ENCODE measurements at regions of chr1 and their contacts with region 1.

Region 1: DNA sequence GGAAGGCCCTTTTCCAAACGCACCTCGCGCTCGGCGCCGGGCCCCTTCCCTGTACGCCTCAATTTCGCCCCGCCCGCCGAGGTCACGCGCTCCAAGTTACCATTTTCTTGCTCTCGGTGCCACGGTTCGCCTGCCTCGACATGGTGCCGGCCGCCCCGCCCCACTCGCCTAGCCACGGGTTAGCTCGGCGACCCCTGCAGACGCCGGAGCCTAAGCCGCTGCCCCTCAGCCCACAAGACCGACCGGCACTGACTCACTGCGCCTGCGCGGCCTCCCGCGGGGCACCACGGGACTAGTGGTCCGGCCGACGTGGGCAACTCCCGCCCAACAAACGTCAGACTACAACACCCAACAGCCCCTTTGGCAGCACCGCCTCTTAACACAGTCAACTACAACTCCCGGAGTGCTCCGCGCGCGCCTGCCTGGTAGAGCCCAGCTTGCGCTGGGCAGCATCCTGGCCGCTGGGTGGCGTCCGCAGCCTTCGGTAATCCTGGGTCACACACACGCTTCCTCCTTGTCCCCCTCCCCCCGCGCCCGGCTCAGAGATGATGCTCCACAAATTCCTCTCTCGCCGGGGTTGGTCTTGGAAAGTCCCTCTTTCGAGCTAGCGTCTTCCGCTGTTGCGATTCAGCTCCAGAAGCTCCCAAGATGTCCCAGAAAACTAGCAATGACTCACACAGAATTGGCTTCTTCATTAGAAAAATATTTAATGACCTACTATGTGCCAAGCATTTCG is at the start of gene TRAPPC3:
- DNase-seq: peak; percentile 100
- ATAC-seq: peak; percentile 92 to 93
- total RNA-seq, gene TRAPPC3: 53.3 to 64.2 TPM

Region 2: GRCh38 chr1:36115200-36115669 is 34.2 kb before region 1 on chr1:
- intact Hi-C with region 1: no loop called
- DNase-seq: no peak
- ATAC-seq: peak; percentile 69 to 83

Region 3: DNA sequence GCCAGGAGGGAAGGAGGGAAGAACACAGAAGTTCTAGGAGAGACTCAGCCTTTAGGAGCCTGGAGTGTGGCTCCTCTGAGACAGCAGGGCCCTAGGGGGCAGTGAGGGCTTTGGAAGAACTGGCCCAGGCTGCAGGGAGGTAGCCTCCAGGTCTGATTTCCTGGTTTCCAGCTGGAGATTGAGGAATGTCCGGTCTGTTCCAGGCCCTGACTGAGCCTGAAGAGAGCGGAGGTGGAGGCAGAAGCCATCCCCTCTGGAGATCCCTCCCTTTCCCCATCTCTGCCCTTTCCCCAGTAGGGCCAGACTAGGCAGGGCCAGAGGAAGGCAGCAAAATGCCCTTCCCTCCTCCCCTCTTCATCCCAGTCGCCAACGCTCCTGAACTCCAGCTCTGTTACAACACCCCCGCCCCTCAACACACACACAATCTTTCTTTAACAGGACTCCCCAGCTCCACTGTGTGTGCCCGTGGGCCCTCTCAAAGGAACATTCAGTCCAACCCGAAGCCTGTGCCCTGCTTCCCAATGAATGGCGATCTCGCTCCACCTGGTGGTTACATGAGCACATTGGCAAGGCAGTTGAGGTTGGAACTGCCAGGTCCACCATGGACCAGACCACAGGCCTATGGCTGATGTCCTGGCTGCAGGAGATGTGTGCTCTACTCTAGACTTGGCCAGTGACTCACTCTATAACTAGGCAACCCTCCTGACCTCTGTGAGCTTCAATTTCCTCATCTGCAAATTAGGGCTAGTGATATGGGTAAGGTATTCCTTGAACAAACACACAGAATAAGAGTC is 38.6 kb after region 1 on chr1:
- intact Hi-C with region 1: loop called (anchors 1 to 5 kb)
- DNase-seq: peak; percentile 87
- ATAC-seq: peak; percentile 93 to 94